ENCODE measurements at regions of chr14 and their contacts with region 1.

Region 1: GRCh38 chr14:43795600-43796228 is 711.4 kb downstream of the FSCB start:
- DNase-seq: peak; percentile 50
- ATAC-seq: peak; percentile 65
- H3K4me3 ChIP-seq: no peak overlapping the region
- H3K27ac ChIP-seq: no peak overlapping the region
- H3K4me1 ChIP-seq: peaks cover 11% of the 10 kb centered on the region
- H3K27me3 ChIP-seq: no peaks in the 10 kb centered on the region
- CTCF ChIP-seq: peak; percentile 69
- EP300 ChIP-seq: no peak
- POLR2A ChIP-seq: no peak
- RAD21 ChIP-seq: peak; percentile 83

Region 2: DNA sequence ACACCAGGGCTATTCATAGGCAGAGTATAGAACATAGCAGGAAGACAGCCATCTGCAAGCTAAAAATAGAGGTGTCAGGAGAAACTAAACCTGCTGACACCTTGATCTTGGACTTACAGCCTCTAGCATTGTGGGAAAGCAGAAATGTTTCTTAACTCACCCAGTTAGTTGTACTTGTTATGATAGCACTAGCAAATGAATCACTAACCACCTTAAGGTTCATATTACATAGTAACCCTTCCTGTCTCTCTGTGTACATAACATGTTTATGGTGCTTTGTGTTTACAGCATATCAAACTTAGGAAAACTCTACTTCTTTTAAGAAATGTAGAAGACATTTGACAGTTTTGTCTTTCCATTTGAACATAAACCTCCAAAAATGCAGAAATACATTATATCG is 320.0 kb before region 1 on chr14:
- CTCF ChIA-PET with region 1: no interaction called
- POLR2A ChIA-PET with region 1: no interaction called
- in situ Hi-C with region 1: no loop called
- intact Hi-C with region 1: loop called (anchors 5 kb)
- DNase-seq: no peak
- ATAC-seq: no peak
- H3K4me3 ChIP-seq: no peak overlapping the region
- H3K27ac ChIP-seq: no peak overlapping the region
- H3K4me1 ChIP-seq: 0 out of 2 replicates have a peak, but pooled peaks cover 5% of the 10 kb centered on the region
- H3K27me3 ChIP-seq: no peaks in the 10 kb centered on the region
- CTCF ChIP-seq: no peak
- EP300 ChIP-seq: no peak
- POLR2A ChIP-seq: no peak
- RAD21 ChIP-seq: no peak

Region 3: GRCh38 chr14:43503590-43503907 is 292.2 kb before region 1 on chr14:
- CTCF ChIA-PET with region 1: interaction called, 3 read pairs
- POLR2A ChIA-PET with region 1: no interaction called
- in situ Hi-C with region 1: no loop called
- intact Hi-C with region 1: loop called (anchors 2 kb)
- DNase-seq: peak; percentile 17
- ATAC-seq: no peak
- H3K4me3 ChIP-seq: no peak overlapping the region
- H3K27ac ChIP-seq: no peak overlapping the region
- H3K4me1 ChIP-seq: no peaks in the 10 kb centered on the region
- H3K27me3 ChIP-seq: no peaks in the 10 kb centered on the region
- CTCF ChIP-seq: peak; percentile 39
- EP300 ChIP-seq: no peak
- POLR2A ChIP-seq: no peak
- RAD21 ChIP-seq: no peak; the same call in 1 of the 2 replicates

Region 4: DNA sequence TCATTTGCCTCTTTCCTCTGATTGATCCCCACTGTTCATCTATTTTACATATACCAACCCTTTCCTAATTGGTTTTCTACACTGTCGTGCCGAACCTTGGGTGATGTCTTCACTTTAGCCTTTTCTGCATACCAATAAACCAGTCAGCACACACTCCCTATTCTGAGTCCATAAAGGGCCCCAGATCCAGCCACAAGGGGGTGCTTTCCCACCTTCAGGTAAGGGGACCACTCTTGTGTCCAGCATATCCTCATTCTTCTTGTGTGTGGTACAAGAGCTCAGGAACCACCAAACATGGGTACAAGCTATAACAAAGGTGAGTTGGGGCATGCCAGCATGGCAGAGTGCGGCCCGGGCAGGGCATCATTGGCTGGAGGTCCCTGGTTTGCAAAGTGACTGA is 148.4 kb before region 1 on chr14:
- CTCF ChIA-PET with region 1: interaction called, 16 read pairs
- POLR2A ChIA-PET with region 1: no interaction called
- in situ Hi-C with region 1: loop called (anchors 25 kb)
- intact Hi-C with region 1: loop called (anchors 1 kb)
- DNase-seq: peak; percentile 23
- ATAC-seq: peak; percentile 77
- H3K4me3 ChIP-seq: no peak overlapping the region
- H3K27ac ChIP-seq: no peak overlapping the region
- H3K4me1 ChIP-seq: peaks cover 16% of the 10 kb centered on the region
- H3K27me3 ChIP-seq: no peaks in the 10 kb centered on the region
- CTCF ChIP-seq: peak; percentile 58
- EP300 ChIP-seq: no peak
- POLR2A ChIP-seq: no peak
- RAD21 ChIP-seq: no peak

Region 5: GRCh38 chr14:43778686-43779639 is 16.8 kb before region 1 on chr14:
- CTCF ChIA-PET with region 1: no interaction called
- POLR2A ChIA-PET with region 1: interaction called, 7 read pairs
- in situ Hi-C with region 1: no loop called
- intact Hi-C with region 1: loop called (anchors 1 kb)
- DNase-seq: peak; percentile 99
- ATAC-seq: peak; percentile 91
- H3K4me3 ChIP-seq: peak overlapping the region in 2 of 3 experiments; percentile 43 to 56; a peak in 3 of 6 replicates
- H3K27ac ChIP-seq: peak overlapping the region; percentile 99
- H3K4me1 ChIP-seq: peaks cover 69% of the 10 kb centered on the region
- H3K27me3 ChIP-seq: no peaks in the 10 kb centered on the region
- CTCF ChIP-seq: no peak
- EP300 ChIP-seq: peak; percentile 65 to 92; a peak in 3 of 4 replicates
- POLR2A ChIP-seq: peak in 1 of 2 experiments; percentile 46; a peak in 1 of 4 replicates
- RAD21 ChIP-seq: peak; percentile 32; the same call in 1 of the 2 replicates

Region 6: GRCh38 chr14:44149597-44149996 is 353.9 kb after region 1 on chr14:
- CTCF ChIA-PET with region 1: no interaction called
- POLR2A ChIA-PET with region 1: no interaction called
- in situ Hi-C with region 1: no loop called
- intact Hi-C with region 1: loop called (anchors 10 kb)
- DNase-seq: peak; percentile 55
- ATAC-seq: peak; percentile 97
- H3K4me3 ChIP-seq: no peak overlapping the region
- H3K27ac ChIP-seq: no peak overlapping the region
- H3K4me1 ChIP-seq: no peaks in the 10 kb centered on the region
- H3K27me3 ChIP-seq: no peaks in the 10 kb centered on the region
- CTCF ChIP-seq: peak; percentile 82
- EP300 ChIP-seq: no peak
- POLR2A ChIP-seq: no peak
- RAD21 ChIP-seq: peak; percentile 40; the same call in 1 of the 2 replicates